ENCODE measurements at regions of chr12 and their contacts with region 1.

Region 1: GRCh38 chr12:108457006-108457733 is 57.9 kb upstream of the FICD start:
- DNase-seq: peak; percentile 45
- H3K4me3 ChIP-seq: no peak overlapping the region
- H3K27ac ChIP-seq: no peak overlapping the region
- H3K4me1 ChIP-seq: no peaks in the 10 kb centered on the region
- H3K27me3 ChIP-seq: peaks cover 5% of the 10 kb centered on the region
- CTCF ChIP-seq: peak; percentile 76 to 83

Region 2: DNA sequence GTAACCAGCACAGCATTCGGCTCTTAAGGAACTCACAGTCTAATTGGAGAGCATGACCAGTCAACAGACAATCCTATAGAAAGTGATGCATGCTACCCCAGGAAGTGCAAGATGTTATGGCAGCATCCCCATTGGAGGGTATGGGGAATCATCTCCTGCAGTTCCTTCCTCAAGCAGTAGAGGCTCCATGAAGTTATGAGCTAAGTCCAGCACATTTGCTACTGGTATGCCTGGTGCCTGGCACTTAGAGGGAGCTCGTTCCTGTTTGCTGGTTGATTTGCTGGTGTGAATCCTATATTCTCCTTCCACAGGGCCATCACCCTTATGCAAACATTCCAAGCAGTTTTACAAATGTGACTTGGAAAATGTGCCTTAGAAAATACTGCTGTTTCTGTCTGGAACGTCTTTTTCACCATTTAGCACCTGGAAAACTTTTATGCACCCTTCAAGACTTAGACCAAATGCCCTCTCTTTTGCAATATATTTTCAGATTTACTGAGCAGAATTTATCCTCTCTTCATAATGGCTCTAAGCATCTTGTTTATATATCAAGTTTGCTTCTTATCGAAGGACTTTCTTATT is 464.2 kb before region 1 on chr12:
- CTCF ChIA-PET with region 1: interaction called, 10 read pairs
- dilution Hi-C with region 1: no loop called
- in situ Hi-C with region 1: no loop called
- intact Hi-C with region 1: loop called (anchors 2 kb)
- DNase-seq: peak; percentile 54
- H3K4me3 ChIP-seq: no peak overlapping the region
- H3K27ac ChIP-seq: no peak overlapping the region
- H3K4me1 ChIP-seq: no peaks in the 10 kb centered on the region
- H3K27me3 ChIP-seq: no peaks in the 10 kb centered on the region
- CTCF ChIP-seq: peak; percentile 43 to 71

Region 3: DNA sequence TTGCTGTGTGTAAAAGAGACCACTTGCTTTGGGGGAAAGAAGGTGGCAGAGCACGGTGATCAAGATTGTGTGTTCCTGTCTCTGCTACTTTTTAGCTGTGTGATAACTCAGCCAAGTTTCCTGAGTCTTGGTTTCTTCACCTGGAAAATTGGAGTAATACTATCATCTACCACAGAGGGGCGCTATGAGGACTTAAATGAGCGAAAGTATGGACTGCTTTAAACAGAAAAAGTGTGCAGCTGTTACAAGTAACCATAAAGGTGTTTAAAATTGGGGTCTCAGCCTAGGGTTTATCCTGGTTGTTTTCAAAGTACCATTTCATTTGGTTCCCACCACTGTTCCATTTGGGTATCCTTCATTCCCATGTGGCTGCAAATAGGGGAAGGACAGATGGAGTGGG is 394.0 kb before region 1 on chr12:
- CTCF ChIA-PET with region 1: no interaction called
- dilution Hi-C with region 1: no loop called
- in situ Hi-C with region 1: no loop called
- intact Hi-C with region 1: loop called (anchors 5 kb)
- DNase-seq: no peak
- H3K4me3 ChIP-seq: no peak overlapping the region
- H3K27ac ChIP-seq: no peak overlapping the region
- H3K4me1 ChIP-seq: no peaks in the 10 kb centered on the region
- H3K27me3 ChIP-seq: no peaks in the 10 kb centered on the region
- CTCF ChIP-seq: peak; percentile 40 to 46

Region 4: GRCh38 chr12:108099073-108099472 is 358.1 kb before region 1 on chr12:
- CTCF ChIA-PET with region 1: no interaction called
- dilution Hi-C with region 1: no loop called
- in situ Hi-C with region 1: no loop called
- intact Hi-C with region 1: loop called (anchors 1 kb)
- DNase-seq: no peak
- H3K4me3 ChIP-seq: no peak overlapping the region
- H3K27ac ChIP-seq: no peak overlapping the region
- H3K4me1 ChIP-seq: no peaks in the 10 kb centered on the region
- H3K27me3 ChIP-seq: no peaks in the 10 kb centered on the region
- CTCF ChIP-seq: peak; percentile 45 to 49

Region 5: DNA sequence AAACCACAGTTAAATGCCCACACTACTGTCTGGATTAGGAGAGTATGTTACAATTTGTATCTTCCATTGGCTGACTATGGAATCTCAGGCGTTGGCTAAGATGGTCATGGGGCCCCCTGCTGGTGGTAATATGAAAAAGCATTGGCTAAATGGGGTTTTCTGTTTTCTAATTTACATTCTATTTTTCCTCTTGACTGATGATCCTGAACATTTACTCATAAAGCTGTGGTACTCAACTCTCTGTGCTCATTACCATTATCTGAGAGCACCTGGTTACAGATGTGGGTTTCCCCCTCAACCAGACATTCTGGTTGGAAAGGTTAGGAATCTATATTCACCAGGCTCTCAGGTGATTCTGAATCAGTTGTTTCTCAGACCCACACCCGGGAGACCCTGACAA is 263.3 kb before region 1 on chr12:
- CTCF ChIA-PET with region 1: no interaction called
- dilution Hi-C with region 1: no loop called
- in situ Hi-C with region 1: no loop called
- intact Hi-C with region 1: loop called (anchors 1 kb)
- DNase-seq: no peak
- H3K4me3 ChIP-seq: no peak overlapping the region
- H3K27ac ChIP-seq: no peak overlapping the region
- H3K4me1 ChIP-seq: no peaks in the 10 kb centered on the region
- H3K27me3 ChIP-seq: no peaks in the 10 kb centered on the region
- CTCF ChIP-seq: peak; percentile 71 to 84

Region 6: DNA sequence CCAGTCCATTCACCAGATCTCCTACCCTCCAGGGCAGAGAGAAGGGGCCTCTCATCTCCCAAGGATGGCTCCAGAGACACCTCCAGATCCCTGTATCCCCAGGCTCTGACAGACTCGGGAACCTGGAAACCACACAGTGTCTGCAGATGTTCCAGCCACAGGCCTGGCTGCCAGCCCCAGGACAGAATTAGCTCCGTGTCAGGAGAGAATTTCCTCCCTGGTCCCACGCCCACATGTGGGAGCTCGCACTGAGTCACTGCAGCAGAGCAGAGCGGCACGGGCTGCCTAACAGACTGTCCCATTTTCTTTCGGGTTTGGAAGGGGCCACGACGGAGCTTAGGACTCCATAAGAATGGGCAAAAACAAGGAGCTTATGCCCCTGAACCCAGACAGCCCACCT is 151.7 kb before region 1 on chr12:
- CTCF ChIA-PET with region 1: interaction called, 11 read pairs
- dilution Hi-C with region 1: no loop called
- in situ Hi-C with region 1: no loop called
- intact Hi-C with region 1: loop called (anchors 1 kb)
- DNase-seq: peak; percentile 73
- H3K4me3 ChIP-seq: peak overlapping the region in 1 of 3 experiments; percentile 2
- H3K27ac ChIP-seq: no peak overlapping the region
- H3K4me1 ChIP-seq: peaks cover 27% of the 10 kb centered on the region
- H3K27me3 ChIP-seq: no peaks in the 10 kb centered on the region
- CTCF ChIP-seq: no peak

Region 7: GRCh38 chr12:108430245-108430644 is 26.9 kb before region 1 on chr12:
- CTCF ChIA-PET with region 1: no interaction called
- dilution Hi-C with region 1: no loop called
- in situ Hi-C with region 1: no loop called
- intact Hi-C with region 1: no loop called
- DNase-seq: no peak
- H3K4me3 ChIP-seq: no peak overlapping the region
- H3K27ac ChIP-seq: no peak overlapping the region
- H3K4me1 ChIP-seq: no peaks in the 10 kb centered on the region
- H3K27me3 ChIP-seq: no peaks in the 10 kb centered on the region
- CTCF ChIP-seq: no peak

Region 8: GRCh38 chr12:108609537-108610335 is 152.6 kb after region 1 on chr12:
- CTCF ChIA-PET with region 1: no interaction called
- dilution Hi-C with region 1: no loop called
- in situ Hi-C with region 1: no loop called
- intact Hi-C with region 1: no loop called
- DNase-seq: no peak
- H3K4me3 ChIP-seq: no peak overlapping the region
- H3K27ac ChIP-seq: no peak overlapping the region
- H3K4me1 ChIP-seq: peaks cover 10% of the 10 kb centered on the region
- H3K27me3 ChIP-seq: no peaks in the 10 kb centered on the region
- CTCF ChIP-seq: no peak